ENCODE measurements at regions of chr10 and their contacts with region 1.

Region 1: DNA sequence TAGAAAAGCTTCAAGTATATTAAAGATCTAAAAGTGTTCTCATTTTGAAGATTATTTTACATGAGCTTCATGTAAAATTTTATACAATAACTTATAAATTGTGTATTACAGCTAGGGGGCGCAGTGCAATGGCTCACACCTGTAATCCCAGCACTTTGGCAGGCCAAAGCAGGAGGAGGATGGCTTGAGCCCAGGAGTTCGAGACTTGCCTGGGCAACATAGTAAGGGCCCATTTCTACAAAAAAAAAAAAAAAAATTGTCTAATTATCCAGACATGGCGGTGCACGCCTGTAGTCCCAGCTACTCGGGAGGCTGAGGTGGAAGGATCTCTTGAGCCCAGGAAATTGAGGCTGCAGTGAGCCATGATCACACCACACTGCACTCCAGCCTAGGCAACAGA is 16.6 kb downstream of the ACBD5 start:
- DNase-seq: no peak
- H3K4me3 ChIP-seq: no peak overlapping the region
- H3K27ac ChIP-seq: no peak overlapping the region
- H3K4me1 ChIP-seq: no peaks in the 10 kb centered on the region
- H3K27me3 ChIP-seq: no peaks in the 10 kb centered on the region
- CTCF ChIP-seq: peak in 5 of 6 experiments; percentile 40 to 67 (median 58)
- POLR2A ChIP-seq: no peak

Region 2: GRCh38 chr10:27155066-27155754 is 68.8 kb before region 1 on chr10 and contains the start of gene MASTL:
- intact Hi-C with region 1: no loop called
- DNase-seq: peak; percentile 75
- H3K4me3 ChIP-seq: peak within 1 kb of the TSS; percentile 74 to 97 (median 84)
- H3K27ac ChIP-seq: peak within 1 kb of the TSS; percentile 97 to 100 (median 100)
- H3K4me1 ChIP-seq: peaks cover 11 to 56% (median 13%) of the 10 kb centered on the region in 3 donors
- H3K27me3 ChIP-seq: no peaks in the 10 kb centered on the region
- CTCF ChIP-seq: peak in 1 of 6 experiments; percentile 24
- POLR2A ChIP-seq: peak in 3 of 4 donors; percentile 77 to 95 (median 90)
- total RNA-seq, gene MASTL: 3.8 to 13.8 (median 7.5) TPM

Region 3: DNA sequence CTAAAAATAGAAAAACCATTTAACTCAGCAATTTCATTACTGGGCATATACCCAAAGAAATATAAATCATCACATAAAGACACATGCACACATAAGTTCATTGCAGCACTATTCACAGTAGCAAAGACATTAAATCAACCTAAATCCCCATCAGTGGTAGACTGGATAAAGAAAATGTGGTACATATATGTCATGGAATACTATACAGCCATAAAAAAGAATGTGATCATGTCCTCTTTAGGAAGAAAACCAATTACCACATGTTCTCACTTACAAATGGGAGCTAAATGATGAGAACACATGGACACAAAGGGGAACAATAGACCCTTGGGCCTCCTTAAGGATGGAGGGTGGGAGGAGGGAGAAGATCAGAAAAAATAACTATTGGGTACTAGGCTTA is 52.6 kb after region 1 on chr10:
- intact Hi-C with region 1: no loop called
- DNase-seq: no peak
- H3K4me3 ChIP-seq: no peak overlapping the region
- H3K27ac ChIP-seq: no peak overlapping the region
- H3K4me1 ChIP-seq: no peaks in the 10 kb centered on the region
- H3K27me3 ChIP-seq: peaks cover 0 to 8% (median 0%) of the 10 kb centered on the region in 4 donors
- CTCF ChIP-seq: no peak
- POLR2A ChIP-seq: no peak

Region 4: DNA sequence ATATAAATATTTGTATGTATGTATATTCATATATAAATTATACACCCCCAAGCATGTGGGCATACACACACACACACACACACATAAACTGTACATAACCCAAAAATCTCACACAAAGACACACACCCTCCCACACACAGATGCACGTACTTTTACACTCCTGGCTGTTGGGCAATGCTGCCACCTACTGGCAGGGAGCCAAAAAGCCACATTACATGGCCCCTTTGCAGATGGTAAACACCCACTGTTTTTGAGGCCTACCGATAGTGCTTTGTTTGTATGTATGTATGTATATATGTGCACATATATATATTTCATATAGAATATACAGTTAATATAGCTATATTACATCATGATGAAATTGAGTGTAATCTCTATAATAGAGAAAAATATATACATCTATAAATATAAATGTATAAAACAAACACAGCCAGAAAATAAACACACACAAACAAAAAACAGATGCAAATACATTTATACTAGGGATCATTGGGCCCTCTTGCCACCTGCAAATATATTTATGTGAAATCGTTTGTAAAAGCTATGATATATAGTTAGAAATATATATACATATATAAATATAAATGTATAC is 136.7 kb after region 1 on chr10:
- intact Hi-C with region 1: loop called (anchors 10 kb)
- DNase-seq: no peak
- H3K4me3 ChIP-seq: no peak overlapping the region
- H3K27ac ChIP-seq: no peak overlapping the region
- H3K4me1 ChIP-seq: no peaks in the 10 kb centered on the region
- H3K27me3 ChIP-seq: no peaks in the 10 kb centered on the region
- CTCF ChIP-seq: peak; percentile 39 to 87 (median 74)
- POLR2A ChIP-seq: no peak

Region 5: GRCh38 chr10:27433976-27434375 is 210.0 kb after region 1 on chr10:
- intact Hi-C with region 1: no loop called
- DNase-seq: no peak
- H3K4me3 ChIP-seq: no peak overlapping the region
- H3K27ac ChIP-seq: no peak overlapping the region
- H3K4me1 ChIP-seq: no peaks in the 10 kb centered on the region
- H3K27me3 ChIP-seq: peaks cover 0 to 4% (median 0%) of the 10 kb centered on the region in 4 donors
- CTCF ChIP-seq: no peak
- POLR2A ChIP-seq: no peak

Measured in esophagus squamous epithelium (tissue), 5 donors.